KBM-7 (cell line): ENCODE measurements at regions of chr17 and their contacts with region 1.

Region 1: DNA sequence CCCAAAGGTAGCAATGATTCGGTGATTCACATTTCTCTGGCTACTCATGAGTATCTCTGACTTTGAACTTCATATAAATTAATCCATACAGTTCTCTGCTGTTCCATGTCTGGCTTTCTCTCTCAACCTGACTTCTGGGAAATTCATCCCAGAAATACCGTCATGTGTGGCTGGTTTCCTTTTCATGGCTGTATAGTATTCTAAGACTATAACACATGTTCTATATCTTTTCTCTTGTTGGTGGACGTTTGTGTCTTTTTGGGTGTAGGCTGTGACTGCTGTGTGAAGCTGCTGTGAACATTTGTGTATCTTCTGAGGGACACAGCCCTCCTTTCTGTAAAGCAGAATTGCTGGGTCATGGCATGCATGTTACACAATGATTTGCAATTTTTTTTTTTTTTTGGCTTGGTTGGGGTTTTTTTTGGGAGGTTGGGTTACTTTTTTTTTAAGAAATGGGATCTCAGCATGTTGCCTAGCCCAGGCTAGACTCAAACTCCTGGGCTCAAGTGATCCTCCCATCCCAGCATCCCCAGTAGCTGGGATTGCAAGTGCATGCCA is 6.3 kb downstream of the TTYH2 start:
- DNase-seq: no peak

Region 2: DNA sequence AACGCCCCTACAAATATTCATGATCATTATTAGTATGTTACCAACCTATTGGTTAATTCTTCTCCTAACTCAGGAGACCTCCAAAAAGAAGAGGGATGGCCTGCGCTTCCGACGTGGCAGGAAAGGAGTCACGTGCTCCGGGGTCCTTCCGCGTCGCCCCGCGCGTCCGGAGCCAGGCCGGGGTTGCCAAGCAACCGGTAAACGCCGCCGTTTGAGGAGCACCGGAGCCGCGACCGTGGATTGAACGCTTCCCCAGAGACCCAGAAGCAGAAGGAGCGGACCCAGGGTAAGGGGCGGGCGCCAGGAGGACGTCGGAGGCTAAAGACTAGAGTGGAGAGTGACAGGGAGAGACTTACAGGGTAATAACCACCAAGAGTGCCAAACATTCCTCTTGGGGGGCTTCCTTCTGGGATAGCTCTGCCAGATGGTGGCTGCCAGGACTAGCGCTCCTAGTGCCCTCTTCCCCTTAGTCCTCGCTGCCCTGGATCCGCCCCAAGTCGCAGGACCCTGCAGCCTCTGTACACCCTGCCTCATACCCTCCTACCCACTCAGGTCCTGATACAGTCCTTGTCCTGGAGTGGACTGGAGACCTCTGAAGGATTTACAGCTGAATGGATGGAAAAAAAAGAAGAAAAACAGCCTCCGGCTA is 54.5 kb after region 1 on chr17 and contains the start of gene DNAI2:
- in situ Hi-C with region 1: loop called (anchors 10 kb)
- DNase-seq: no peak